T-cell (primary cell): ENCODE measurements at regions of chr1 and their contacts with region 1.

Region 1: DNA sequence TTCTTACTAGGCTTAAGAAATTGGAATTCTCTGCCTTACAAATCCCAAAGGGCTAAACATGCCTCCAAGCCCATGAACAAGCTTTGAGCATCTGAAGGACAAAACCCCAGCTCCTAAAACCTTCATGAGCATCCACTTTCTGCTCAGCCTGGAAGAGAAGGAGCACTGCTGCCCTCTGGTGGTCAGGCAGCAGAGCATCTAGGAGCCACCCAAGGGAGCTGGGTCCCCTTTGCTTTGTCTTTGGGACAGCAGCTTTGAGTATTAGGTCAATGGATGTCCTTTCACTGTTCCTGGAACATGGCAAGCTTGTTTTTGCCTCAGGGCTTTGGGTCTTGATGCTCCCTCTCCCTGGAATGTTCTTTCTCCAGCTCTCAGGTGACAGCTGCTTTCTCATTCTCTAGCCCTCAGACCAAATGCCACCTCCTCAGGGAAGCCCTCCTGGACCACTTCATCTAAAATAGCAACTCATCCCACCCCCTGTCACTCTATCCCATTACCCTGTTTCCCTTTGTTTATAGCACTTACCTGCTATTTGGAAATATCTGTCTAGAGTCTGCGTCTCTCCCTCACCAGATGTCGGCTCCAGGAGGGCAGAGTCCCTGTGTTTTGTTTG is 25.7 kb downstream of the RAB7B start:
- DNase-seq: peak; percentile 31 to 88 (median 67)
- ATAC-seq: peak; percentile 66 to 79 (median 74)
- H3K4me3 ChIP-seq: no peak overlapping the region
- H3K4me3 Mint-ChIP-seq: no peak overlapping the region
- H3K27ac ChIP-seq: no peak overlapping the region
- H3K27ac Mint-ChIP-seq: no peak overlapping the region
- H3K4me1 ChIP-seq: peaks cover 0 to 3% of the 10 kb centered on the region in 2 experiments
- H3K4me1 Mint-ChIP-seq: no peaks in the 10 kb centered on the region
- H3K27me3 ChIP-seq: peaks cover 0 to 14% of the 10 kb centered on the region in 2 experiments
- H3K27me3 Mint-ChIP-seq: peaks cover 2 to 3% of the 10 kb centered on the region in 2 donors

Region 2: GRCh38 chr1:205791568-205792180 is 185.8 kb before region 1 on chr1:
- CTCF ChIA-PET with region 1: interaction called, 44 to 63 read pairs
- POLR2A ChIA-PET with region 1: no interaction called
- DNase-seq: peak in 34 of 35 experiments; percentile 20 to 77 (median 50)
- ATAC-seq: peak; percentile 82 to 91 (median 90)
- H3K4me3 ChIP-seq: no peak overlapping the region
- H3K4me3 Mint-ChIP-seq: no peak overlapping the region
- H3K27ac ChIP-seq: no peak overlapping the region
- H3K27ac Mint-ChIP-seq: no peak overlapping the region
- H3K4me1 ChIP-seq: no peaks in the 10 kb centered on the region
- H3K4me1 Mint-ChIP-seq: no peaks in the 10 kb centered on the region
- H3K27me3 ChIP-seq: no peaks in the 10 kb centered on the region
- H3K27me3 Mint-ChIP-seq: no peaks in the 10 kb centered on the region

Region 3: DNA sequence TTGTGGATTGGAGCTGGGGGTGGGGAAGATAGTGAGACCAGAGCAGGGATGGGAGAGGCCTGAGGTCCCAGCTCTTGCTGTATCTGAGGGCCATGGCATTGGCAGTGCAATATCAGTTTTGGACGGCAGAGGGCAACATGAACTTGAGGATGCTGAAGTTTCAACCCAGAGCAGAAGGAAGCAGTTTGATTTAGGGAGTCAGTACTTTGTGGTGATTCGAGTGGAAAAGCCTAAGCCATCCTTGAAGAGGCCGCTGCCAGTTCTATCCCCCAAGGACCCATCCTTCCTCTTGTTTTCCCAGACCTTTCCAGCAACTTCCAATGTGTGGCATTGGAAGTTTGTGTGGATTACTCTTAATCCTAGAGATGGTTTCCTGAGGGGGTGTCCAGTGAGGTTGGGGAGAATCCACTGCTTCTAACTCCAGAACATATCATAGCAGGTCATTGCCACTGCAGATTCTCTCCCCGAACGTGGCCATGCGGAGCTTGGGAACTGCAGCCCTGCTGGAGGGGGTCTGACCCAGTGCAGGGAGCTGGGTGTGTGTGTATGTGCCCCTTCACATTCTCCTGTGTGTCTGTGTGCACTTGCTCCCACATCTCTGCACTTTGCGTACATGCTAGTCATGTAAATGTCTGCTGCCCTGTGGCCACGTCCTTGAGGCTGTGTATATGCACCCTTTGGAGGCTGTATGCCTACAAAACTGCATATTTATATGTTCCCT is 58.3 kb before region 1 on chr1:
- CTCF ChIA-PET with region 1: interaction called, 9 to 19 read pairs
- POLR2A ChIA-PET with region 1: no interaction called
- DNase-seq: peak; percentile 8 to 75 (median 50)
- ATAC-seq: peak; percentile 49 to 82 (median 75)
- H3K4me3 ChIP-seq: no peak overlapping the region
- H3K4me3 Mint-ChIP-seq: no peak overlapping the region
- H3K27ac ChIP-seq: no peak overlapping the region
- H3K27ac Mint-ChIP-seq: no peak overlapping the region
- H3K4me1 ChIP-seq: no peaks in the 10 kb centered on the region
- H3K4me1 Mint-ChIP-seq: no peaks in the 10 kb centered on the region
- H3K27me3 ChIP-seq: peaks cover 0 to 14% of the 10 kb centered on the region in 2 experiments
- H3K27me3 Mint-ChIP-seq: peaks cover 0 to 9% of the 10 kb centered on the region in 2 donors

Region 4: DNA sequence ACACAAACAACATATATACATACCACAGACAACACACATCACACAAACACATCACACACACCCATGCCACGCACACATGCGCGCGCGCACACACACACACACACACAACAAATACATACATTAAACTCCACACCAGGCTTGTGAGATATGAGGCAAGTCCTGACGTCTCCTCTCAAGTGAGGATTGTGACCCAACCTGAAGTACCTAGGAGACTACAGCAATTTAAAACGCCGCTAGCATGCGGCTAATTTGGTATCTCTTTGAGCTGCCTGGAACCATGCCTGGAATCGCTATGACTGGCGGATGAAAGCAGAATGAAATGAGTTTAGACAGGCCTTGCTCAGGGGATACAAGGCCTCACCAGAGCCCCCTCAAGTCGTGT is 27.3 kb after region 1 on chr1:
- CTCF ChIA-PET with region 1: no interaction called
- POLR2A ChIA-PET with region 1: no interaction called
- DNase-seq: no peak
- ATAC-seq: no peak
- H3K4me3 ChIP-seq: no peak overlapping the region
- H3K4me3 Mint-ChIP-seq: no peak overlapping the region
- H3K27ac ChIP-seq: no peak overlapping the region
- H3K27ac Mint-ChIP-seq: no peak overlapping the region
- H3K4me1 ChIP-seq: no peaks in the 10 kb centered on the region
- H3K4me1 Mint-ChIP-seq: peaks cover 0 to 6% (median 0%) of the 10 kb centered on the region in 3 donors
- H3K27me3 ChIP-seq: peaks cover 0 to 18% of the 10 kb centered on the region in 2 experiments
- H3K27me3 Mint-ChIP-seq: peaks cover 7 to 13% of the 10 kb centered on the region in 2 donors

Region 5: DNA sequence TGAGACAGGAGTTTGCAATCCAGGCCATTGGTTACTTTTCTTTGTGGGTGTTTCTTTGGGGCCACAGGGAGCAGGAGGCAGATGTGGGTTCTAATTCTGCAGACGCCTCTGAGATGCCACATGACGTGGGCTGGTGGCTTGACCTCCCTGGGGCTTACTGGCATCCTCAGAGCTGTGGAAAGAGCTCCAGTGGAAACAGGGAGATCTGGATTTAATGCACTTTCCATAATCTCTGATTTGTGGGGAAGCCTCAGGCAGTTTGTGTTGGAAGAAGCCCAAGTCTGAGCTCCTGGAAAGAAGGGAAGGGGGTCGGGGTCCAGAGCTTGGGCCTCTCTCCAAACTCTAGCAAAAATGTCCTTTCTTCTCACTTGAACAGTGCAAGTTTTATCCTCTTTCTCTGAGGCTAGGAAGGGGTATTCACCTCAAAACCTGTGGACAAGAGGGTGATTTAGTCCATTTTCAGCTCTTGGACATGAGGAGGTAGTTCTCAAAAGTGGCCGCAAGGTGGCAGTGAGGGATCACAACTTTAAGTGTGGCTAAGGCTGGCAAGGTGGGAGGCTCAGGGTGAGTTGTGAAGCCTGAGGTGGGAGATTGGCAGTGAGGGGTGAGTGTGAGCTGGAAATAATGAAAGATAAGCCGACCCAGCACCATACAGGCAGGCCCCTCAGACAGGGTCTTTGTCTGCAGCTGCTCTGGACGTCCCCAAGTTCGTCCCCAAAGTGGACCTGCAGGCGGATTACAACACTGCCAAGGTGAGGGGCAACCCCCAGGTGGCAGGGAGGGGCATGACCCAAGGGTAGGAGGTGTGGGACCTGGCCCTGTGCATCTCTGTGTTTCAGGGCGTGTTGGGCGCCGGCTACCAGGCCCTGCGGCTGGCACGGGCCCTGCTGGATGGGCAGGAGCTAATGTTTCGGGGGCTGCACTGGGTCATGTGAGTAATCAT is 501.9 kb after region 1 on chr1:
- CTCF ChIA-PET with region 1: no interaction called
- POLR2A ChIA-PET with region 1: no interaction called
- DNase-seq: peak; percentile 34 to 85 (median 61)
- ATAC-seq: peak; percentile 70 to 81 (median 74)
- H3K4me3 ChIP-seq: no peak overlapping the region
- H3K4me3 Mint-ChIP-seq: no peak overlapping the region
- H3K27ac ChIP-seq: peak overlapping the region; percentile 16
- H3K27ac Mint-ChIP-seq: peak overlapping the region; percentile 64 to 78
- H3K4me1 ChIP-seq: peaks cover 0 to 18% of the 10 kb centered on the region in 2 experiments
- H3K4me1 Mint-ChIP-seq: peaks cover 9 to 31% (median 14%) of the 10 kb centered on the region in 3 donors
- H3K27me3 ChIP-seq: no peaks in the 10 kb centered on the region
- H3K27me3 Mint-ChIP-seq: no peaks in the 10 kb centered on the region